Posterior cingulate gyrus (tissue), 11 donors: ENCODE measurements at regions of chr2 and their contacts with region 1.

Region 1: DNA sequence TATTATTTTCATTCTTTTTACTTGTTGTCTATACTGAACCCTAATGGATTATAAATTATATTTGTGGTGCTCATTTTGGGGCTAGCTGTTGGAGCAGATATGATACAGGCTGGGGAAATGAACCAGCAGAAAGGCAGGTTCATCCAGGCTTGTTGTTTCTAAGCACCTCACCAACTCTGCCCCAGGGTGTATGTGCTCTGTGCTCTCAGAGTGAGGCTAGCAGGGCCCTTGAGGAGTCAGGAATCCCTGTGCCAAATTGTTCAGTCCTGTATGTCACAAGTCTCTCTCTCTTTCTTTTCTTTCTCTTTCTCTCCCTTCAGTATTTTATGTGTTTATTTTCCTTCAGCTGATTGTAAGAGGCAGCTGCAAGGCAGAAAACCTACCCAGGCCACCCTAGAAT is 181.1 kb upstream of the DPP10 start:
- DNase-seq: no peak

Region 2: GRCh38 chr2:114421781-114422180 is 160.4 kb after region 1 on chr2:
- intact Hi-C with region 1: loop called (anchors 10 kb)
- DNase-seq: no peak